T-cell (primary cell): ENCODE measurements at regions of chr10 and their contacts with region 1.

Region 1: DNA sequence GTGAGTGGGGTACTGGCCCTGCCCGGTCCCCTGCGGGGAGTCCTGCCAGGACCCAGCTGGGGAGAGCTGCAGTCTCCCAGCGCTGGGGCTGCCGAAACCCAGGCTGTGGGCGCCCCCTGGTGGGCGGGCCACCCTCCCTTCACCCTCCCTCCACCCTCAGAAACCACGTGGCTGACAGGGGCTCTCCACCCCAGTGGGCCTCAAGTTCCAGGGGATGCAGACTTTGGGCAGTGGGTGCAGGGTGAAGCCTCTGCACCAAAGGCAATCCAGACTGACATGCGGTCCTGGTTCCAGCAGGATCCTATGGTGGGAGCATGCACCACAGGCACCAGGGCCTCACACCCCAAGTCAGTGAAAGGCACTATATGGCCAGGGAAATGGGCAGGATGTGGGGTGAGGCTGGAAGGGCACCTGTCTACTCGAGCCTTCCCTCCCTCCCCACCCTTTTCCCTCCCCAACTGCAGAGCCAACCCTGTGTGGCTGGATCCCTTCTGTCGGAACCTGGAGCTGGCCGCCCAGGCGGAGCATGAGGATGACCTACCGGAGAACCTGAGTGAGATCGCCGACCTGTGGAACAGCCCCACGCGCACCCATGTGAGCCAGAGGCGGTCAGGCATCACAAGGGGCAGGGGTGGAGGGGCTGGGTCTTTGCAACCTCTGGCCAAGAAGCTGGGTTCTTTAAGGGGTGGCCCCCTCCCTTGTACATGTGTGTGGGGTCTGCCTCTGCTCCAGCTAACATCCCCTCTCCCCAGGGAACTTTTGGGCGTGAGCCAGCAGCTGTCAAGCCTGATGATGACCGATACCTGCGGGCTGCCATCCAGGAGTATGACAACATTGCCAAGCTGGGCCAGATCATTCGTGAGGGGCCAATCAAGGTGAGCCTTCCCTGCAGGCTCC is 38.8 kb downstream of the PSAP start:
- DNase-seq: peak; percentile 35 to 88 (median 74)
- ATAC-seq: peak; percentile 88 to 96 (median 94)
- H3K4me3 ChIP-seq: no peak overlapping the region
- H3K4me3 Mint-ChIP-seq: no peak overlapping the region
- H3K27ac ChIP-seq: no peak overlapping the region
- H3K27ac Mint-ChIP-seq: no peak overlapping the region
- H3K4me1 ChIP-seq: peaks cover 0 to 7% of the 10 kb centered on the region in 2 experiments
- H3K4me1 Mint-ChIP-seq: no peaks in the 10 kb centered on the region
- H3K27me3 ChIP-seq: peaks cover 0 to 3% of the 10 kb centered on the region in 2 experiments
- H3K27me3 Mint-ChIP-seq: no peaks in the 10 kb centered on the region

Region 2: DNA sequence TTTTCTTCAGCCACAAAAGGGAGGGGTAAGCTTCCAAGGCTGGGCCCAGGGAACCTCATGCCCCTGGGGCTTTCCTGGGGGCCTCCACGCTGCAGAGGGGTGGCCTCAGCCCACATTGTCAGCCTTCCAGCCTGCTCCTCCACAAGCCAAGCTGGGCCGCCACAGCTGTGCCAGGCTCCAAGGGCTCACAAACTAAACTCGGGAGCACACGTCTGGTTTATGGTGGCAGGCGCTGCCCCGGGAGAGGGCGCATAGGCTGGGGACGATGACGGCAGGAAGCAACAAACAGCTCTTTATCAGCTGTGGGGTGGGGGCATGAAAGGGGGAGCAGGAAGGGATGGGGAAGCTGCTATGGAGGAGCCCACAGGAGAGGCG is 421.8 kb before region 1 on chr10:
- CTCF ChIA-PET with region 1: interaction called in 1 of 2 experiments, 14 read pairs
- POLR2A ChIA-PET with region 1: no interaction called
- DNase-seq: no peak
- ATAC-seq: peak in 1 of 4 experiments; percentile 42
- H3K4me3 ChIP-seq: no peak overlapping the region
- H3K4me3 Mint-ChIP-seq: no peak overlapping the region
- H3K27ac ChIP-seq: no peak overlapping the region
- H3K27ac Mint-ChIP-seq: no peak overlapping the region
- H3K4me1 ChIP-seq: no peaks in the 10 kb centered on the region
- H3K4me1 Mint-ChIP-seq: peaks cover 0 to under 1% (median 0%) of the 10 kb centered on the region in 3 donors
- H3K27me3 ChIP-seq: peaks cover 0 to 47% of the 10 kb centered on the region in 2 experiments
- H3K27me3 Mint-ChIP-seq: peaks cover 33 to 45% of the 10 kb centered on the region in 2 donors

Region 3: DNA sequence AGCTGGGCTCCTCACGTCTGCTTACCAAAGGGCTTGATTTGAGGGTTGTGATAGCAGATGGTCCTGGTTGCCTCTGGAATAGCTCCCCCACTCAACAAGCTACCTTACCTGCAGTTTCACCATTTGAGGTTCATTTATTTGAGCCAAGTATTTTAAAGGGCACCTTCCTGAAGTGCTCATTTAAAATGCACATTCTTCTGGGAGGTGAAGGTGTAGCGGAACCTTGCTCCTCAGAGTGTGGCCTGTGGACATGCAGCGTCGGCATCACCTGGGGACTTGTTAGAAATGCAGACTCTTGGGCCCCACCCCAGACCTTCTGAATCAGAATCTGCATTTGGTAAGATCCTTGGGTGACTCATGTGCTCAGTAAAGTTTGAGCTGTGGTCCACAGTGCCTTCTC is 413.3 kb before region 1 on chr10:
- CTCF ChIA-PET with region 1: interaction called in 1 of 2 experiments, 4 read pairs
- POLR2A ChIA-PET with region 1: interaction called in 1 of 2 experiments, 11 read pairs
- DNase-seq: peak in 1 of 35 experiments; percentile 1
- ATAC-seq: no peak
- H3K4me3 ChIP-seq: no peak overlapping the region
- H3K4me3 Mint-ChIP-seq: peak overlapping the region in 2 of 3 donors; percentile 1 to 34
- H3K27ac ChIP-seq: no peak overlapping the region
- H3K27ac Mint-ChIP-seq: no peak overlapping the region
- H3K4me1 ChIP-seq: peaks cover 0 to 13% of the 10 kb centered on the region in 2 experiments
- H3K4me1 Mint-ChIP-seq: peaks cover 7 to 11% (median 8%) of the 10 kb centered on the region in 3 donors
- H3K27me3 ChIP-seq: peaks cover 5 to 57% of the 10 kb centered on the region in 2 experiments
- H3K27me3 Mint-ChIP-seq: peaks cover 34 to 58% of the 10 kb centered on the region in 2 donors

Region 4: GRCh38 chr10:71795248-71795647 is 17.0 kb before region 1 on chr10:
- CTCF ChIA-PET with region 1: no interaction called
- POLR2A ChIA-PET with region 1: no interaction called
- DNase-seq: peak in 1 of 35 experiments; percentile 27
- ATAC-seq: no peak
- H3K4me3 ChIP-seq: no peak overlapping the region
- H3K4me3 Mint-ChIP-seq: no peak overlapping the region
- H3K27ac ChIP-seq: no peak overlapping the region
- H3K27ac Mint-ChIP-seq: no peak overlapping the region
- H3K4me1 ChIP-seq: peaks cover 7 to 25% of the 10 kb centered on the region in 2 experiments
- H3K4me1 Mint-ChIP-seq: peaks cover 15 to 18% (median 16%) of the 10 kb centered on the region in 3 donors
- H3K27me3 ChIP-seq: peaks cover 0 to 13% of the 10 kb centered on the region in 2 experiments
- H3K27me3 Mint-ChIP-seq: no peaks in the 10 kb centered on the region

Region 5: DNA sequence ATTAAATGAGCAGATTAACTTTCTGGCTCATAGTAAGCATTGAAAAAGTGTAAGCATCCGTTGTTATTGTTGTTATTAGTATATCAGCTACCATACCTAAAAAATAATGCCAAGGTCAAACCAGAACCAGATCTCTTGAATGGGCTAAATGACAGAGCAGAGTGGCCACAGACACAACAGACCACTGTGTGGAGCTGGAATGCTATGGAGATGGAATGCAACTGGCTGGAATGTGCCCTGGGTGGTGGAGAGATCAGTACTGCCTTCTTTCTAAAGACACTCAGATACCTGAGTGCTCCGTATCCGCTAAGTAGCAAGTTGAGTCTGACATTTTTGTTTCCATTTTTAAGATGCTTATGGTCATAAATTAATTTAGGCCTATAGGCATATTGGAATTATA is 562.9 kb after region 1 on chr10:
- CTCF ChIA-PET with region 1: interaction called in 1 of 2 experiments, 10 read pairs
- POLR2A ChIA-PET with region 1: no interaction called
- DNase-seq: no peak
- ATAC-seq: no peak
- H3K4me3 ChIP-seq: no peak overlapping the region
- H3K4me3 Mint-ChIP-seq: no peak overlapping the region
- H3K27ac ChIP-seq: no peak overlapping the region
- H3K27ac Mint-ChIP-seq: no peak overlapping the region
- H3K4me1 ChIP-seq: peaks cover 0 to 19% of the 10 kb centered on the region in 2 experiments
- H3K4me1 Mint-ChIP-seq: peaks cover 6 to 8% (median 6%) of the 10 kb centered on the region in 3 donors
- H3K27me3 ChIP-seq: no peaks in the 10 kb centered on the region
- H3K27me3 Mint-ChIP-seq: no peaks in the 10 kb centered on the region